Activated T-helper 1 cell treated with anti-CD3 and anti-CD28 coated beads, Interleukin-12 subunit alpha, Interleukin-12 subunit beta, Interleukin-2, Interleukin-4 antibody, amounts not matched to agents 30 ng/mL and 10 ng/mL and 1 ng/mL, durations not matched to agents 14 hours and 24 hours and 36 hours (primary cell): ENCODE measurements at regions of chr13 and their contacts with region 1.

Region 1: GRCh38 chr13:19959831-19960652 is 1.5 kb downstream of the ZMYM2 start:
- DNase-seq: peak; percentile 80
- H3K4me3 Mint-ChIP-seq: peak overlapping the region; percentile 95
- H3K27ac Mint-ChIP-seq: peak overlapping the region; percentile 93
- H3K4me1 Mint-ChIP-seq: peaks cover 25% of the 10 kb centered on the region
- H3K27me3 Mint-ChIP-seq: peaks cover 8% of the 10 kb centered on the region

Region 2: GRCh38 chr13:19681517-19681916 is 278.5 kb before region 1 on chr13:
- intact Hi-C with region 1: loop called (anchors 5 kb)
- DNase-seq: no peak
- H3K4me3 Mint-ChIP-seq: no peak overlapping the region
- H3K27ac Mint-ChIP-seq: no peak overlapping the region
- H3K4me1 Mint-ChIP-seq: peaks cover 24% of the 10 kb centered on the region
- H3K27me3 Mint-ChIP-seq: no peaks in the 10 kb centered on the region

Region 3: GRCh38 chr13:19863323-19864023 is 96.6 kb before region 1 on chr13 and contains the start of gene ZMYM5:
- intact Hi-C with region 1: loop called (anchors 1 kb)
- DNase-seq: peak; percentile 95
- H3K4me3 Mint-ChIP-seq: peak within 1 kb of the TSS; percentile 99
- H3K27ac Mint-ChIP-seq: peak within 1 kb of the TSS; percentile 97
- H3K4me1 Mint-ChIP-seq: peaks cover 43% of the 10 kb centered on the region
- H3K27me3 Mint-ChIP-seq: peaks cover 3% of the 10 kb centered on the region
- total RNA-seq, gene ZMYM5: 12.2 and 14.2 TPM in 2 replicates

Region 4: DNA sequence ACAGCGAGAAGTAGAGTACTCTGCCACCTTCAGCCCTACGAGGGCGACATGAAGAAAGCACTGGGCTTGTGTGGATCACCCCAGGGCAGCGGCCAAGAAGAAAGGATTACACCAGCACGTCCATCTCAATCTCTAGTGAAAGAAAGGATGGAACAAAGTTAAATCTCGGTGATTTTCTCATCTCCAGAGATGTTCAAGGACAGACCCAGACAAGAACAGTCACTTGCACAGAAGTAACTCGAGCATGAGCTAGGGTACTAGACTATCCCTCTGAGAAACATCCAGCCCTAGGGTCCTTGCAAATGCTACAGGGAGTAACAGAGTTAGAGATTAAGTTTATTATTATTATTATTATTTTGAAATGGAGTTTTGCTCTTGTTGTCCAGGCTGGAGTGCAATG is 458.9 kb after region 1 on chr13:
- intact Hi-C with region 1: loop called (anchors 1 kb)
- DNase-seq: no peak
- H3K4me3 Mint-ChIP-seq: no peak overlapping the region
- H3K27ac Mint-ChIP-seq: peak overlapping the region; percentile 42
- H3K4me1 Mint-ChIP-seq: peaks cover 57% of the 10 kb centered on the region
- H3K27me3 Mint-ChIP-seq: peaks cover 2% of the 10 kb centered on the region

Region 5: GRCh38 chr13:20566898-20567874 is 607.1 kb after region 1 on chr13 and contains the start of gene IFT88:
- intact Hi-C with region 1: loop called (anchors 10 kb)
- DNase-seq: peak; percentile 85
- H3K4me3 Mint-ChIP-seq: peak within 1 kb of the TSS; percentile 88
- H3K27ac Mint-ChIP-seq: peak within 1 kb of the TSS; percentile 88
- H3K4me1 Mint-ChIP-seq: peaks cover 27% of the 10 kb centered on the region
- H3K27me3 Mint-ChIP-seq: no peaks in the 10 kb centered on the region
- total RNA-seq, gene IFT88: 1.5 TPM in 2 replicates

Region 6: DNA sequence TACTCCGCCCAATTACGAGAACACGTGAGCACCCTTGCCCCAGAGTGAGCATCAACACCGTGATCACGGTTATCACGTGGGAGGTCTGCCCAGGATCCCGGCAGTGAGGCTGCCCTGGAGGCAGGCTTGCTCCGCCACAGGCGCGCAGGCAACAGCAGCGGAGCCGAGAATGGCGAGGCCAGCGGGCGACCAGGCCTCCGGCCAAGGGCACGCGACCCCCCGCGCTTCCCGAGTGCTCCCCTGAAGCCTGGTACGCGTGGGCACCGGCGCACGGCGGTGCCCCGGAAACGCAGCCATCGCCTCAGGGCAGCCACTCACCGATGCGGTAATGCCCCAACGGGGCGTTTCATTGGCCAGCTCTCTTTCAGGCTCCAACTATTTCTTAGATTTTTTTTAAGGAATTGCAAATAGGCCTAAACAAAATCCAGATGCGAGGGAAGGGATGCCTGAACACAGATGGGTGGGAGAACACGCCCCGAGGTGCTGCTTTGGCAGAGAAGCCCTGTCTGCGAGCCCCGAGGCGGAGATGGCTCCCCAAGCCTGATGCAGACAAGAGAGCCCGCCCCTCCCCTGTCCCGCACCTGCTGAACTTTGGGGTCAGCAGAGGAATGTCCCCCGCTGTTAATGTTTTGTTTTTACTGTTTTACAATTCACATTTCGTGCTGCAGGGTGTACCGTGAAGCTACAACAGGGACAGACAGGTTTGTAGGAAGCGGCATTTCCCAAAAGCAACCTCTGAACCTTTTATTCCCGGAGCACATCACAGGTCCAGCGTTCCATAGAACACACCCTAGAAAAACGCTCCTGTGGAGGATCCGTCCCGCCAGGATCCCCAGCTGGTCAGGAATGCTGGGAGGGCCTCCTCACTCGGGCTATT is 1366.4 kb after region 1 on chr13:
- intact Hi-C with region 1: no loop called
- DNase-seq: no peak
- H3K4me3 Mint-ChIP-seq: no peak overlapping the region
- H3K27ac Mint-ChIP-seq: no peak overlapping the region
- H3K4me1 Mint-ChIP-seq: peaks cover 44% of the 10 kb centered on the region
- H3K27me3 Mint-ChIP-seq: no peaks in the 10 kb centered on the region